Endothelial cell of umbilical vein (primary cell): ENCODE measurements at regions of chr12 and their contacts with region 1.

Region 1: DNA sequence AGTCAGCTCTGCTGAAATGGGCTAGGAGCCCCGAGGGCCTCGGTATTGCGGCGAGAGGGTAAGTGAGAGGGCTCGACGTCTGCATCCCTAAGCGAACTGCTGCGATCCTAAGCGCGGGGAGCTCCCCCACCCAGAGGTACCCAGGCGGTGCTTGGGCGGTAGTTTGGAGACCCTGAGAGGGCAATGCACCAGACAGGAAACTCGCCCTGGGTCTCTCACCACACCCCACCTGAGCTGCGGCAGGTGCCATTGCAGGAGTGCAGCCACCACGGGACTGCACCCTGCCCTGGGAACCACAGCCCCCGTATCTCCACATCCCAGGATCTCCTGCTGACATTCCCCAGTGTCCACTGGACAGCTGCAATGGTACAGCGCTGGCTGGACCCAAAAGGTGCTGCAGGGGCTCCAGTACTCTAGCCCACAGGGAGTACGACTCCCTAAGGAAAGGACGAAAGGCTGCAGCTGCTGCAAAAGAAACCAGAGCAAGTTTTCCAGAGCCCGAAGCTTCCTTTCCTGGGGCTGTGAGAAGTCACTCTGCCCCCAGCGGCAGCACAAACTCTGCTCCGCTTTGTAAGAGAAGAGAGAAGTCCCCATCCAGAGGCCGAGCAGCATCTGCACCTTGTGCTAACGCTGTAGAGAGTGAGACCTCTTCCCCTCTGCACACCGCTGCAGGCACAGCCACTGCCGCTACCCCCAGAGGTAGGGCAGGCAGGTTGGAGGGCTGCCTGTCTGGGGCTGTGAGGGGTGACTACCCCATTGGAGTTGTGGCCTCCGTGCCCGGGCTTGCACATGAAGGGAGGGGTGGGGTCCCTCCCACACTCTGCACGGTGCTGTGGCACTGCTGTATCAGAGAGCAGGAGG is 31.1 kb upstream of the MON2 start:
- DNase-seq: peak; percentile 52
- H3K4me3 ChIP-seq: peak overlapping the region; percentile 4 to 51 (median 23)
- H3K27ac ChIP-seq: no peak overlapping the region
- H3K4me1 ChIP-seq: peaks cover 9% of the 10 kb centered on the region
- H3K27me3 ChIP-seq: peaks cover 12 to 30% of the 10 kb centered on the region in 2 experiments
- CTCF ChIP-seq: peak; percentile 37 to 78
- POLR2A ChIP-seq: no peak

Region 2: GRCh38 chr12:62135553-62136200 is 299.9 kb before region 1 on chr12:
- CTCF ChIA-PET with region 1: no interaction called
- POLR2A ChIA-PET with region 1: no interaction called
- dilution Hi-C with region 1: no loop called
- intact Hi-C with region 1: no loop called
- DNase-seq: no peak
- H3K4me3 ChIP-seq: no peak overlapping the region
- H3K27ac ChIP-seq: no peak overlapping the region
- H3K4me1 ChIP-seq: no peaks in the 10 kb centered on the region
- H3K27me3 ChIP-seq: peaks cover 0 to 23% of the 10 kb centered on the region in 2 experiments
- CTCF ChIP-seq: no peak
- POLR2A ChIP-seq: no peak

Region 3: GRCh38 chr12:62448436-62448835 is 12.9 kb after region 1 on chr12:
- CTCF ChIA-PET with region 1: interaction called, 19 read pairs
- POLR2A ChIA-PET with region 1: no interaction called
- dilution Hi-C with region 1: no loop called
- intact Hi-C with region 1: no loop called
- DNase-seq: no peak
- H3K4me3 ChIP-seq: no peak overlapping the region
- H3K27ac ChIP-seq: no peak overlapping the region
- H3K4me1 ChIP-seq: no peaks in the 10 kb centered on the region
- H3K27me3 ChIP-seq: peaks cover 5 to 21% of the 10 kb centered on the region in 2 experiments
- CTCF ChIP-seq: no peak
- POLR2A ChIP-seq: no peak

Region 4: DNA sequence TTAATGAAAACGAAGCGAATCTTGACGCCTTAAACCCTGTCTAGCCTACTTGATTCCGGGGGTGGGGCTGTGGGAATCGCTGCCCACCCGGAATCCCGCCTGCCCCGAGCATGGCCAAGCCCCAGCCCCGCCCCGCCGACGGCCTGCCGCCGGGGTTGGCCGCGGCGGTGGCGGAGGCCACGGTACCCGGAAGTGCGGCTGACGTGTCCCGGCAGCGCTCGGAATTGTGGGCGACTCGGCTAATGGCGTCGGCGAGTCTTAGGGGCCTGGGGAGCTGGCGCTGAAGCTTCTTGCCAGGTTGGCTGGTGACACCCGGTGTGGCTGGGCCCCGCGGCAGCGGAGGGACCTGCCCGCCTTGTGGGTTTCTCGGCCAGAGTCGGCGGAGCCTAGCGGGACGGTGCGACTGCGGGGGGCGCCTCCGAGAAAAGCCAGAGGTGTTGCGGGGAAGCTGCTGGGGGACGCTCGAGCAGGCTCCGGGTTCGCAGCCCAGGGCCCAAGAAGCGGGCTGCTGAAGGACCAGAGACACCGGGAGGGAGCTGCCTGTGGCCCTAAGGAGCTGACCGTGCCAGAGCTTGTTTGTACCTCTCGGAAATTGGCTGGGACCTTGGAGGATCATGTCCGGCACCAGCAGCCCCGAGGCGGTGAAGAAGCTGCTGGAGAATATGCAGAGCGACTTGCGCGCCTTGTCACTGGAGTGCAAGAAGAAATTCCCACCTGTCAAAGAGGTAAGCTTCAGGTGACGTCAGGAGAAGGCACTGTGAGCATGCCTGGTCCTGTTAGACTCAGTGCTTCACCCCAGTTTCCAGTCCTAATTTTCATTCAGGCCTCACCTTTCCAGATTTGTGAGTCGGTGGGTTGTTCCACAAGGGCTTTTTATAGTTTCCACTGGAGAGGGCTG is 31.3 kb after region 1 on chr12 and contains the start of gene MON2:
- CTCF ChIA-PET with region 1: interaction called, 18 read pairs
- POLR2A ChIA-PET with region 1: no interaction called
- dilution Hi-C with region 1: no loop called
- intact Hi-C with region 1: loop called (anchors 1 kb)
- DNase-seq: peak; percentile 89
- H3K4me3 ChIP-seq: peak within 1 kb of the TSS; percentile 83 to 90 (median 88)
- H3K27ac ChIP-seq: peak within 1 kb of the TSS; percentile 92
- H3K4me1 ChIP-seq: peaks cover 9% of the 10 kb centered on the region
- H3K27me3 ChIP-seq: peaks cover 0 to 2% of the 10 kb centered on the region in 2 experiments
- CTCF ChIP-seq: no peak
- POLR2A ChIP-seq: peak; percentile 92
- total RNA-seq, gene MON2: 41.8 and 43.0 TPM in 2 replicates

Region 5: DNA sequence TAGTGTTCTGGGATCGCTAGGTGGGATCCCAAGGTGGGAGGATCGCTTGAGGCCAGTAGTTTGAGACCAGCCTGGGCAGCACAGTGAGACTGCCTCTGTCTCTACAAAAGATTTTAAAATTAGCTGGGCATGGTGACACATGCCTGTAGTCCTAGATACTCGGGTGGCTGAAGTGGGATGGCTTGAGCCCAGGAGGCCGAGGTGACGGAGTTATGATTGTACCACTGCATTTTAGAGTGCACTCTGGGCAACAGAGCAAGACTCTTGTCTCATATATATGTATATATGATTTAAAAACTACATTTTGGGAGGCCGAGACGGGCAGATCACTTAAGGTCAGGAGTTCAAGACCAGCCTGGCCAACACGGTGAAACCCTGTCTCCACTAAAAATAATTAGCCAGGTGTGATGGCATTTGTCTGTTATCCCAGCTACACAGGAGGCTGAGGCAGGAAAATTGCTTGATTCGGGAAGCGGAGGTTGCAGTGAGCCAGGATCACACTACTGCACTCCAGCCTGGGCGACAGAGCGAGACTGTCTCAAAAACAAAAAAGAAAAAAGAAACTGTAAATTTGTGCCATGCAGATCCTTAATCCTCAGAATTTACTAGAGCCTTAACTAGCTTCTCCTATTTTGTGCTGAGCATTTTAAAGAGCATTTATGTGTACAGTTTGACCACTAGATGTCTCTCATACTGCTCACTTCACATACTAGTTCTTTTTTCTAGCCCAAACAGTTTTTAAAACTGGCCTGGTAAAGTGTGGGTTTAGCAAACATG is 145.9 kb after region 1 on chr12:
- CTCF ChIA-PET with region 1: interaction called, 49 read pairs
- POLR2A ChIA-PET with region 1: no interaction called
- dilution Hi-C with region 1: no loop called
- intact Hi-C with region 1: loop called (anchors 1 kb)
- DNase-seq: peak; percentile 58
- H3K4me3 ChIP-seq: no peak overlapping the region
- H3K27ac ChIP-seq: no peak overlapping the region
- H3K4me1 ChIP-seq: no peaks in the 10 kb centered on the region
- H3K27me3 ChIP-seq: no peaks in the 10 kb centered on the region
- CTCF ChIP-seq: peak; percentile 43 to 58
- POLR2A ChIP-seq: no peak

Region 6: GRCh38 chr12:62744551-62744950 is 309.0 kb after region 1 on chr12:
- CTCF ChIA-PET with region 1: no interaction called
- POLR2A ChIA-PET with region 1: no interaction called
- dilution Hi-C with region 1: no loop called
- intact Hi-C with region 1: no loop called
- DNase-seq: no peak
- H3K4me3 ChIP-seq: no peak overlapping the region
- H3K27ac ChIP-seq: no peak overlapping the region
- H3K4me1 ChIP-seq: no peaks in the 10 kb centered on the region
- H3K27me3 ChIP-seq: no peaks in the 10 kb centered on the region
- CTCF ChIP-seq: no peak
- POLR2A ChIP-seq: no peak

Region 7: DNA sequence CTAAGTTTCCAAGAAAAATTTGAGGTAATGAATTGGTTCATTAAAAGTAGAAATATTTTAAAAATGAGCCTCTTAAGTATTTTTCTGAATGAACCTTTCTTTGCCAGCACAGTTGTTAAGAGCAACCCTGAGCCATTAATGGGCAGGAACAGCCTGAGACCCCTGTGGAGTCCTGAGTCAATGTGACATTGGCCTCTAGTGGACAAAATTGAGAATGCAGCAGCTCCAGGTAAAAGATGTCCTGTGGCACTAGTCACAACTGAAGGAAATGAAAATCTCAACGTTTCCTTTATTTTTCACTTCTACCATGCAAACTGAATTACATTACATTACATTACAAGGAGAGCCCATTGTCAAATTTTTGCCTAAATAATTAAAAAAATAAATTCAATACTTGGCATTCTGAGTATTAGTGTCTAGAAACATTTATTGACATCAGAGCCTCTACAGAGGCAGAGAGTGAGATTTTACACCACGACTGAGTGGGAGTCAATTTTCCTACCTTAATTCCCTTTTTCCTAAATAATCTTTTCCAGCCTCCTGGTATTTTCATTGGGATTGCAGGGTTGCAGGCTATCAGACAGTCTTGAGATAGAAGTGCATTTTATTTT is 363.7 kb after region 1 on chr12:
- CTCF ChIA-PET with region 1: interaction called, 258 read pairs
- POLR2A ChIA-PET with region 1: no interaction called
- dilution Hi-C with region 1: no loop called
- intact Hi-C with region 1: loop called (anchors 1 kb)
- DNase-seq: peak; percentile 73
- H3K4me3 ChIP-seq: no peak overlapping the region
- H3K27ac ChIP-seq: no peak overlapping the region
- H3K4me1 ChIP-seq: no peaks in the 10 kb centered on the region
- H3K27me3 ChIP-seq: no peaks in the 10 kb centered on the region
- CTCF ChIP-seq: peak; percentile 88 to 91
- POLR2A ChIP-seq: no peak

Region 8: GRCh38 chr12:62934799-62935674 is 499.5 kb after region 1 on chr12 and contains the start of gene PPM1H:
- CTCF ChIA-PET with region 1: no interaction called
- POLR2A ChIA-PET with region 1: no interaction called
- dilution Hi-C with region 1: no loop called
- intact Hi-C with region 1: loop called (anchors 10 kb)
- DNase-seq: peak; percentile 63
- H3K4me3 ChIP-seq: peak within 1 kb of the TSS; percentile 29 to 62 (median 57)
- H3K27ac ChIP-seq: no peak within 1 kb of the TSS
- H3K4me1 ChIP-seq: peaks cover 8% of the 10 kb centered on the region
- H3K27me3 ChIP-seq: peaks cover 15 to 23% of the 10 kb centered on the region in 2 experiments
- CTCF ChIP-seq: peak in 1 of 2 donors; percentile 52
- POLR2A ChIP-seq: no peak
- total RNA-seq, gene PPM1H: 4.9 and 7.2 TPM in 2 replicates

Region 9: GRCh38 chr12:63068857-63069442 is 633.4 kb after region 1 on chr12:
- CTCF ChIA-PET with region 1: interaction called, 33 read pairs
- POLR2A ChIA-PET with region 1: no interaction called
- dilution Hi-C with region 1: no loop called
- intact Hi-C with region 1: loop called (anchors 1 kb)
- DNase-seq: peak; percentile 80
- H3K4me3 ChIP-seq: no peak overlapping the region
- H3K27ac ChIP-seq: no peak overlapping the region
- H3K4me1 ChIP-seq: no peaks in the 10 kb centered on the region
- H3K27me3 ChIP-seq: peaks cover 2% of the 10 kb centered on the region in 2 experiments
- CTCF ChIP-seq: peak; percentile 29 to 35
- POLR2A ChIP-seq: no peak